Endothelial cell of umbilical vein (primary cell): ENCODE measurements at regions of chr21 and their contacts with region 1.

Region 1: GRCh38 chr21:37338671-37339551 is 27.7 kb upstream of the DYRK1A start:
- DNase-seq: peak; percentile 76
- H3K4me3 ChIP-seq: no peak overlapping the region
- H3K27ac ChIP-seq: peak overlapping the region; percentile 88
- H3K4me1 ChIP-seq: peaks cover 36% of the 10 kb centered on the region
- H3K27me3 ChIP-seq: no peaks in the 10 kb centered on the region
- CTCF ChIP-seq: no peak
- POLR2A ChIP-seq: no peak

Region 2: DNA sequence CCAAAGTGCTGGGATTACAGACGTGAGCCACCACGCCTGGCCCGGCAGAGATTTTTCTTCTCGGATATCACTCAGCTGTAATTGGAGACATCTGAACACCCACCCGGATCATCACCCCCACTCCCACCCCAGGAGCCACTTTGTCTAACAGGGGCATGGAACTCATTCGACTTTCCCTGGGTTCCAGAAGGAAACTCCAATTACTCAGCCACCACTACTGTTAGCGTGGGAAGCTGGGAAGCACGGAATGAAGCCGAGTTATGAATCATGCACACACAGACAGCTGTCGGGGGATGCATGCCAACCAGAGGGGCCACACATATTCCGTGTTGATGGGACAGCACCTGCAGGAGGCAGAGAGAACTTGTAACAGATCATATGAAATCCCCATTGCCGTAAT is 457.7 kb before region 1 on chr21:
- CTCF ChIA-PET with region 1: no interaction called
- POLR2A ChIA-PET with region 1: no interaction called
- dilution Hi-C with region 1: no loop called
- intact Hi-C with region 1: no loop called
- DNase-seq: no peak
- H3K4me3 ChIP-seq: no peak overlapping the region
- H3K27ac ChIP-seq: no peak overlapping the region
- H3K4me1 ChIP-seq: no peaks in the 10 kb centered on the region
- H3K27me3 ChIP-seq: no peaks in the 10 kb centered on the region
- CTCF ChIP-seq: no peak
- POLR2A ChIP-seq: no peak

Region 3: GRCh38 chr21:37358397-37358796 is 19.5 kb after region 1 on chr21:
- CTCF ChIA-PET with region 1: interaction called, 4 read pairs
- POLR2A ChIA-PET with region 1: no interaction called
- dilution Hi-C with region 1: no loop called
- intact Hi-C with region 1: loop called (anchors 1 kb)
- DNase-seq: peak; percentile 97
- H3K4me3 ChIP-seq: no peak overlapping the region
- H3K27ac ChIP-seq: peak overlapping the region; percentile 86
- H3K4me1 ChIP-seq: peaks cover 20% of the 10 kb centered on the region
- H3K27me3 ChIP-seq: no peaks in the 10 kb centered on the region
- CTCF ChIP-seq: no peak
- POLR2A ChIP-seq: peak; percentile 82